BJ (cell line): ENCODE measurements at regions of chr9 and their contacts with region 1.

Region 1: GRCh38 chr9:1743121-1743960 is 271.8 kb upstream of the SMARCA2 start:
- DNase-seq: no peak
- H3K4me3 ChIP-seq: no peak overlapping the region
- H3K27me3 ChIP-seq: no peaks in the 10 kb centered on the region
- CTCF ChIP-seq: no peak

Region 2: GRCh38 chr9:1726993-1727759 is 16.2 kb before region 1 on chr9:
- CTCF ChIA-PET with region 1: no interaction called
- POLR2A ChIA-PET with region 1: interaction called, 11 read pairs
- DNase-seq: no peak
- H3K4me3 ChIP-seq: no peak overlapping the region
- H3K27me3 ChIP-seq: no peaks in the 10 kb centered on the region
- CTCF ChIP-seq: no peak